K562 (cell line): ENCODE measurements at regions of chr5 and their contacts with region 1.

Region 1: DNA sequence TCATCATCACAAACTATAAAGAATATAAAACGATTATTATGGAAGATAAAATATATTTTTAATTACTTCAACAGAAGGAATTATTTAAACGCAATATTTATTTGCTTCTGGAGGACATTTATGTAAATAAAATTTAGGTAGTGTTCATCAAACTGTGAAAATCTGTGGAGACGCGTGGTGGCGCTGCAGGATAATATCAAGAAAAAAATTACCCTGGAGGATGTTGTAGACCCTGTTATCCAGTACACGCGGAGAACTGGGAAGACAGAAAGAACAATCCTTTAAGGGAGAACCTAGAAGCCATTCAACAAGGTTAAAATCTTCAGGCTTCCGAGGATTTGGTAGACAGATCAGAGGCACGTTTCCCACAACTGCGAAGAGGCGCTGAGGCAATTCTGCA is at the start of gene PCDHB12:
- DNase-seq: peak in 2 of 4 experiments; percentile 7 to 8
- ATAC-seq: no peak
- H3K4me3 ChIP-seq: no peak within 1 kb of the TSS
- H3K27ac ChIP-seq: no peak within 1 kb of the TSS
- H3K4me1 ChIP-seq: no peaks in the 10 kb centered on the region
- H3K27me3 ChIP-seq: no peaks in the 10 kb centered on the region; a peak in 1 of 5 replicates
- CTCF ChIP-seq: peak; percentile 39 to 52 (median 43); a peak in 5 of 6 replicates
- EP300 ChIP-seq: no peak
- POLR2A ChIP-seq: no peak
- RAD21 ChIP-seq: peak in 1 of 2 experiments; percentile 21; a peak in 1 of 4 replicates
- polyA plus RNA-seq, gene PCDHB12: not detected

Region 2: GRCh38 chr5:141557681-141558136 is 349.2 kb after region 1 on chr5:
- CTCF ChIA-PET with region 1: no interaction called
- POLR2A ChIA-PET with region 1: no interaction called
- in situ Hi-C with region 1: no loop called
- intact Hi-C with region 1: loop called (anchors 2 kb)
- DNase-seq: peak; percentile 50 to 78 (median 54)
- ATAC-seq: peak; percentile 86
- H3K4me3 ChIP-seq: no peak overlapping the region
- H3K27ac ChIP-seq: peak overlapping the region; percentile 67; the same call in 2 of the 3 replicates
- H3K4me1 ChIP-seq: no peaks in the 10 kb centered on the region; a peak in 1 of 5 replicates
- H3K27me3 ChIP-seq: no peaks in the 10 kb centered on the region
- CTCF ChIP-seq: peak; percentile 68 to 82 (median 76)
- EP300 ChIP-seq: no peak
- POLR2A ChIP-seq: no peak
- RAD21 ChIP-seq: peak; percentile 61 to 71